ENCODE measurements at regions of chr19 and their contacts with region 1.

Region 1: GRCh38 chr19:16062789-16063188 is 13.5 kb upstream of the TPM4 start:
- DNase-seq: peak; percentile 66 to 86 (median 79)
- H3K4me3 ChIP-seq: peak overlapping the region in 1 of 3 experiments; percentile 27
- H3K4me3 Mint-ChIP-seq: no peak overlapping the region
- H3K27ac ChIP-seq: peak overlapping the region; percentile 26 to 59
- H3K27ac Mint-ChIP-seq: peak overlapping the region; percentile 68 to 92 (median 88)
- H3K4me1 ChIP-seq: peaks cover 5 to 12% of the 10 kb centered on the region in 2 donors
- H3K4me1 Mint-ChIP-seq: peaks cover 23% of the 10 kb centered on the region
- H3K27me3 ChIP-seq: no peaks in the 10 kb centered on the region
- H3K27me3 Mint-ChIP-seq: no peaks in the 10 kb centered on the region
- CTCF ChIP-seq: peak; percentile 98

Region 2: GRCh38 chr19:16118489-16119033 is 55.8 kb after region 1 on chr19:
- intact Hi-C with region 1: loop called in 1 of 2 experiments (anchors 5 kb)
- DNase-seq: peak; percentile 85 to 96 (median 86)
- H3K4me3 ChIP-seq: peak overlapping the region in 1 of 3 experiments; percentile 65
- H3K4me3 Mint-ChIP-seq: peak overlapping the region; percentile 51 to 78
- H3K27ac ChIP-seq: peak overlapping the region; percentile 89 to 96
- H3K27ac Mint-ChIP-seq: peak overlapping the region; percentile 92 to 98 (median 96)
- H3K4me1 ChIP-seq: peaks cover 69% of the 10 kb centered on the region in 2 donors
- H3K4me1 Mint-ChIP-seq: peaks cover 61% of the 10 kb centered on the region
- H3K27me3 ChIP-seq: no peaks in the 10 kb centered on the region
- H3K27me3 Mint-ChIP-seq: peaks cover 0 to 5% (median 2%) of the 10 kb centered on the region in 3 donors
- CTCF ChIP-seq: no peak

Region 3: DNA sequence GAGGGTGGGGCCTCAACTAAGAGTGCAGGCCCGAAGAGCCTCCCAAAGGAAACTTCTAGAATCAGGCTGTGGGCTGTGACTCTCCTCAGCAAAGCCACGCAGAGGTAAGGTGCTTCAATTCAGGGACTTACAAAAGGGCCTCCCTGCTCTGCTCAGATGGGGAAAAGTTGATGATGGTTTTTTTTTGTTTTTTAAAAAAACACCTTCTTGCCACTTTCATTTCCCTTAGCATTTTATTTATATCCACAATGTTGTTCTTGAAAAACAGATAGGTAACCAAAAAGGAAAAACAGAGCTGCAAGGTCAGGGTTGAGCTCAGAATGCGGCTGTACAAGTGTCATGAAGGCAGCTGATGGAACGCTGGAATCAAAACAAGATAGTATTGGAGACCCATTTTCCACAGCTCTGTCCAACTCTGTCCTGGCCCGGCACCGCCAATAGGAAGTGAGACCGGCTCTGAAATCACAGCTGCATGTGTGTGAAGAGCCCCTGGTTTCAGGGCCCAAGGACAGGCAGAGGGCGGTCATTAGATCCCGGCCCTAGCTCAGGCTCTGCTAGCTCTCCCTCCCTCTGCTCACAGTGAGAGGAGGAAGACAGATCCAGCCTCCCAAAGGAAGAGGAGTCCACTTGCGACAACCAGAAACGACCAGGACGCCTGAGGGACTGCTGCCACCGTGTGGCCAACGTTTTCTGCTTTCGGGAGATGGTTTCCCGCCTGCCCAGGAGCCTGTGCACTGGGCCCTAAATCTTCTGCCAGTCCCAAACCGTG is 320.2 kb after region 1 on chr19:
- intact Hi-C with region 1: loop called in 1 of 2 experiments (anchors 10 kb)
- DNase-seq: peak; percentile 71 to 76 (median 75)
- H3K4me3 ChIP-seq: peak overlapping the region in 1 of 3 experiments; percentile 67
- H3K4me3 Mint-ChIP-seq: peak overlapping the region; percentile 66 to 80
- H3K27ac ChIP-seq: peak overlapping the region; percentile 44 to 78
- H3K27ac Mint-ChIP-seq: peak overlapping the region; percentile 79 to 95 (median 89)
- H3K4me1 ChIP-seq: peaks cover 16 to 21% of the 10 kb centered on the region in 2 donors
- H3K4me1 Mint-ChIP-seq: peaks cover 22% of the 10 kb centered on the region
- H3K27me3 ChIP-seq: no peaks in the 10 kb centered on the region
- H3K27me3 Mint-ChIP-seq: peaks cover 0 to 2% (median 2%) of the 10 kb centered on the region in 3 donors
- CTCF ChIP-seq: peak; percentile 89

Measured in CD14-positive monocyte (primary cell).